ENCODE measurements at regions of chr12 and their contacts with region 1.

Region 1: GRCh38 chr12:48903982-48904411 is 21.3 kb downstream of the FKBP11 start:
- DNase-seq: peak; percentile 88
- ATAC-seq: peak; percentile 91
- H3K4me3 Mint-ChIP-seq: peak overlapping the region; percentile 38
- H3K27ac Mint-ChIP-seq: peak overlapping the region; percentile 68
- H3K4me1 Mint-ChIP-seq: peaks cover 19% of the 10 kb centered on the region
- H3K27me3 Mint-ChIP-seq: peaks cover 9% of the 10 kb centered on the region

Region 2: DNA sequence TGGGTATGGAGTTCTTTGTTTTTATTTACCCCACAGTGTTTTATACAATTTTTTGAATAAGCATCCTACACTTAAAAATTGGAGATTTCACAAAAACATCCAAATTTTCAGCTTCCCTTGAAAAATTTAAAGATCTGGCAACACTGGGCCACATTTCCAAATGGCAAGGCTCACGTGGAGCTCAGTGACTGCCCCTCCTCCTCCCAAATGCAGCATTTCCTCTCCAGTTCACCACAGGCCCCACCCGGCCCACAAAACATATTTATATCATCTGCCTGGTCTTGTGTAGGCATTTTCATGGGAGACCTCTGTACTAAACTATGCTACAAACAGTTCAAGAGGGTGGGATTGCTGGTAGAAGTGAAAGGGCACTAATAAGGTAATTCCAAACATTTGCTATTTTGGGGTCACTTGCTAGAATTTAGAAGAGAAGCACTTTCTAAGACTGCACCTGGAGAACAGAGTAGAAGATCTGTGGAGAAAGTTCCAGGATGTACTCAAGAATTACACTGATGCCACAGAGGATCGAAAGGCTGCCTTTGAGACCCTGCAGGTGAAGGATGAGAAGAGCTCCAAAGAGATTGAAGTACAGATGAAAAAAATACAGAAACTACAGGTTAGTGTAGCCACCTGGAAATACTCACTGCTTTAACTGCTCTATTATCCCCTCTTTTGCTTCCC is 14.0 kb after region 1 on chr12:
- CTCF ChIA-PET with region 1: interaction called, 38 read pairs
- DNase-seq: peak; percentile 77
- ATAC-seq: peak; percentile 89
- H3K4me3 Mint-ChIP-seq: peak overlapping the region; percentile 70
- H3K27ac Mint-ChIP-seq: peak overlapping the region; percentile 84
- H3K4me1 Mint-ChIP-seq: peaks cover 31% of the 10 kb centered on the region
- H3K27me3 Mint-ChIP-seq: no peaks in the 10 kb centered on the region

Region 3: DNA sequence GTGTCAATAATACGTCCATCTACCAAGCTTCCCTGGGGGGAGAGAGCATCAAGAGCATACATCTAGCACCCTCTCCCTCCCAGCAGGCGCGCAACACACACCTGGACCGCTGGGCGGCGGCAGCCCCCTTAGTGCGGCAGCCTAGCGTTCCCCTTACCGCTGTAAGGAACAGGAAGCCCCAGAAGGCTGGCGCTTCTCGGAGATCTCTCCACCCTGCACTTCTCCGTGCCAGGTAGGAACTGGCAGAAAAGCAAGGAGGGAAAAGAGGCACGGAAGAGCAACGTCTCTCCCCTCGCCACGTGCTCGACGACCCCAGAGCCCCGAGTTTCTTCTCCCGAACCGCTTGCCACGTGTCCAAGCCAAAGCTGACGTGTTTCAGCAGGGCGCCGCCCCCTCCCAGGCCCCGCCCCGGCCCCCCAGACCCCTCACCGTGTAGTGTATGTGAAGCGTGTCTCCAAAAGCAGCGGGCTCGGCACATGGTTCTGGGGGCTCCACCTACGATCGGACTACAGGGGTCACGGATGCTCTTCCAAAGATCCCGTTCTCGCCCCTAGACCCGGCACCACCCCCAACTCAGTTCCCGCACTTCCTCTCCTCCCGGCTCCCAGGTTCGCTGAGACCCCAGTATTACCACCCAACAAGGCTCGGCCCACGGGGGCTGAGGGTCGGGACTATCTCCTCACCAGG is 20.8 kb after region 1 on chr12:
- CTCF ChIA-PET with region 1: interaction called, 38 read pairs
- DNase-seq: peak; percentile 83
- ATAC-seq: peak; percentile 74
- H3K4me3 Mint-ChIP-seq: peak overlapping the region; percentile 92
- H3K27ac Mint-ChIP-seq: peak overlapping the region; percentile 95
- H3K4me1 Mint-ChIP-seq: peaks cover 43% of the 10 kb centered on the region
- H3K27me3 Mint-ChIP-seq: no peaks in the 10 kb centered on the region

Region 4: GRCh38 chr12:48936379-48936979 is 32.5 kb after region 1 on chr12:
- CTCF ChIA-PET with region 1: interaction called, 18 read pairs
- DNase-seq: peak; percentile 88
- ATAC-seq: peak; percentile 57
- H3K4me3 Mint-ChIP-seq: no peak overlapping the region
- H3K27ac Mint-ChIP-seq: peak overlapping the region; percentile 39
- H3K4me1 Mint-ChIP-seq: peaks cover 28% of the 10 kb centered on the region
- H3K27me3 Mint-ChIP-seq: no peaks in the 10 kb centered on the region

Region 5: GRCh38 chr12:48977315-48978281 is 73.6 kb after region 1 on chr12:
- CTCF ChIA-PET with region 1: interaction called, 26 read pairs
- DNase-seq: peak; percentile 81
- ATAC-seq: peak; percentile 62
- H3K4me3 Mint-ChIP-seq: peak overlapping the region; percentile 22
- H3K27ac Mint-ChIP-seq: no peak overlapping the region
- H3K4me1 Mint-ChIP-seq: peaks cover 55% of the 10 kb centered on the region
- H3K27me3 Mint-ChIP-seq: peaks cover 84% of the 10 kb centered on the region

Region 6: DNA sequence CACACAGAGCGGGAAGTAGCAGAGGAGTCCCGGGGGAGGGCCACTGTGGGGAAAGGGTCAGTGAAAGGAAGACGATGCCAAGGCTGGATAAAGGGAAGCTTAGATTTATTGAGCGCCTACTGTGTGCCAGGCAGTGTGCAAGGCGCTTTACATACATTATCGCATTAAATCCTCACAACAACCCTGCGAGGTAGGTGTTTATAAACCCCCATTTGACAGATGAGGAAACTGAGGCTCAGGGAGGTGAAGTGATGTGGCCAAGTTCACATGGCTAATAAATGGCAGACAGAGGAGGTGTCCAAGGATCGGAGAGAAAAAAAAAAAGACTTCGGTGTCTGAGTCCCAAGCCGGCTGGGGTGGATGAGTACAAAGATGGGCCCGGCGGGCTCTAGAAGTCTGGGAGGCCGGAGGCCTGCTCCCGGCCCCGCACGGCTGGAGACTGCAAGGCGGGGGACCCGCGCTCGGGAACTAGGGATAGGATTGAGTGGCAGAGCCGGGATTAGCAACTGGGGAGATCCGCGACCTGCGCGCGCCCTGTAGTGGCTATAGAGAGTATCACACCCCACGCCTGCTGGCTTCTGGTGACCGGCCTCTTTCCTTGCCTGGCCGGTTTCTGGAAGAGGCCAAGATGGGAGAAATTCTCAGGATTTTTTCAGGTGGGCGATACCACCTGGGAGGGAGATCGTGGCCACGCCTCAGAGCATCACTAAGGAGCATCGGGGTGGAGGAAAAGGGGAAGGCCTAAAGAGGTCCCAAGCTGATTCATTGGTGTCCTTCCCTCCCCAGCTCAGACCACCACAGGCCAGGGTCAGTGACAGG is 91.3 kb after region 1 on chr12:
- CTCF ChIA-PET with region 1: interaction called, 11 read pairs
- DNase-seq: peak; percentile 65
- ATAC-seq: peak; percentile 44
- H3K4me3 Mint-ChIP-seq: no peak overlapping the region
- H3K27ac Mint-ChIP-seq: no peak overlapping the region
- H3K4me1 Mint-ChIP-seq: peaks cover 33% of the 10 kb centered on the region
- H3K27me3 Mint-ChIP-seq: peaks cover 60% of the 10 kb centered on the region